ENCODE measurements at regions of chr2 and their contacts with region 1.

Region 1: GRCh38 chr2:85266146-85267041 is 61.4 kb downstream of the TGOLN2 start:
- DNase-seq: peak; percentile 51 to 63 (median 54)
- H3K4me3 ChIP-seq: no peak overlapping the region
- H3K4me3 Mint-ChIP-seq: no peak overlapping the region
- H3K27ac ChIP-seq: no peak overlapping the region
- H3K27ac Mint-ChIP-seq: no peak overlapping the region
- H3K4me1 ChIP-seq: no peaks in the 10 kb centered on the region
- H3K4me1 Mint-ChIP-seq: no peaks in the 10 kb centered on the region
- H3K27me3 ChIP-seq: no peaks in the 10 kb centered on the region
- H3K27me3 Mint-ChIP-seq: peaks cover 2 to 12% of the 10 kb centered on the region in 2 donors

Region 2: DNA sequence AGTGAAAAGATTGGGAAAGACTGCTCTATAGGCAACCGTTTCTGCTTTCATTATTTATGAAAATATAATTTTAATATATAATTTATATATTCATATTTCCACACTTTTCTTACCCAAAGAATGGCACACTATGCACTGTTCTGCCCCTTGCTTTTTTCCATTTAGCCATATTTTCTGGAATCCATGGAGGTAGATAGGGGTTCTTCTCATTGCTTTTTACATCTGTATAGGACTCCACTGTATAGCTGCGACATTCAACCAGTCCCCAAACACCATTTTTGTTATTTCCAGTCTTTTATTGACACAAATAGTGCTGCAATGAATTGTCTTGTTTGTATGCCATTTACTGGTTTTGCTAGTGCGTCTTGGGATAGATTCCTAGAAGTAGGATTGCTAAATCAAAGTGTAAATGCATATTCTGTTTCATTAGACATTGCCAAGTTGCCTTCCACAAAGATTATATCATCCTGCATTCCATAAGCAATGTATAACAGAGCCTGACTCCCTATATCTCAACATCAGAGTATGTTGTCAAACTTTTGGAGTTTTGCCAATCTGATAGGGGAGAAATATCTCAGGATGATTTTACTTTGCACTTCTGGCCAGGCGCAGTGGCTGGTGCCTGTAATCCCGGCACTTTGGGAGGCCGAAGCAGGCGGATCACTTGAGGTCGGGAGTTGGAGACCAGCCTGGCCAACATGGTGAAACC is 159.7 kb before region 1 on chr2:
- CTCF ChIA-PET with region 1: no interaction called
- POLR2A ChIA-PET with region 1: no interaction called
- intact Hi-C with region 1: no loop called
- DNase-seq: no peak
- H3K4me3 ChIP-seq: no peak overlapping the region
- H3K4me3 Mint-ChIP-seq: no peak overlapping the region
- H3K27ac ChIP-seq: no peak overlapping the region
- H3K27ac Mint-ChIP-seq: no peak overlapping the region
- H3K4me1 ChIP-seq: no peaks in the 10 kb centered on the region
- H3K4me1 Mint-ChIP-seq: no peaks in the 10 kb centered on the region
- H3K27me3 ChIP-seq: no peaks in the 10 kb centered on the region
- H3K27me3 Mint-ChIP-seq: peaks cover 0 to 10% of the 10 kb centered on the region in 2 donors

Region 3: GRCh38 chr2:85255813-85256594 is 10.4 kb before region 1 on chr2:
- CTCF ChIA-PET with region 1: interaction called, 10 read pairs
- POLR2A ChIA-PET with region 1: interaction called, 5 read pairs
- intact Hi-C with region 1: no loop called
- DNase-seq: no peak
- H3K4me3 ChIP-seq: no peak overlapping the region
- H3K4me3 Mint-ChIP-seq: no peak overlapping the region
- H3K27ac ChIP-seq: no peak overlapping the region
- H3K27ac Mint-ChIP-seq: no peak overlapping the region
- H3K4me1 ChIP-seq: no peaks in the 10 kb centered on the region
- H3K4me1 Mint-ChIP-seq: no peaks in the 10 kb centered on the region
- H3K27me3 ChIP-seq: no peaks in the 10 kb centered on the region
- H3K27me3 Mint-ChIP-seq: peaks cover 0 to 1% of the 10 kb centered on the region in 2 donors

Region 4: GRCh38 chr2:85865539-85866164 is 599.3 kb after region 1 on chr2:
- CTCF ChIA-PET with region 1: no interaction called
- POLR2A ChIA-PET with region 1: no interaction called
- intact Hi-C with region 1: no loop called
- DNase-seq: peak in 1 of 5 donors; percentile 44
- H3K4me3 ChIP-seq: no peak overlapping the region
- H3K4me3 Mint-ChIP-seq: peak overlapping the region in 7 of 8 donors; percentile 14 to 64 (median 48)
- H3K27ac ChIP-seq: peak overlapping the region; percentile 13
- H3K27ac Mint-ChIP-seq: peak overlapping the region; percentile 55 to 89 (median 79)
- H3K4me1 ChIP-seq: peaks cover 55% of the 10 kb centered on the region
- H3K4me1 Mint-ChIP-seq: peaks cover 46 to 85% (median 63%) of the 10 kb centered on the region in 4 donors
- H3K27me3 ChIP-seq: no peaks in the 10 kb centered on the region
- H3K27me3 Mint-ChIP-seq: no peaks in the 10 kb centered on the region